Dendritic cell treated with granulocyte-macrophage colony-stimulating factor and Interleukin-4, amounts not matched to agents 40 ng/mL and 50 ng/mL, for 4 days (primary cell): ENCODE measurements at regions of chr6 and their contacts with region 1.

Region 1: DNA sequence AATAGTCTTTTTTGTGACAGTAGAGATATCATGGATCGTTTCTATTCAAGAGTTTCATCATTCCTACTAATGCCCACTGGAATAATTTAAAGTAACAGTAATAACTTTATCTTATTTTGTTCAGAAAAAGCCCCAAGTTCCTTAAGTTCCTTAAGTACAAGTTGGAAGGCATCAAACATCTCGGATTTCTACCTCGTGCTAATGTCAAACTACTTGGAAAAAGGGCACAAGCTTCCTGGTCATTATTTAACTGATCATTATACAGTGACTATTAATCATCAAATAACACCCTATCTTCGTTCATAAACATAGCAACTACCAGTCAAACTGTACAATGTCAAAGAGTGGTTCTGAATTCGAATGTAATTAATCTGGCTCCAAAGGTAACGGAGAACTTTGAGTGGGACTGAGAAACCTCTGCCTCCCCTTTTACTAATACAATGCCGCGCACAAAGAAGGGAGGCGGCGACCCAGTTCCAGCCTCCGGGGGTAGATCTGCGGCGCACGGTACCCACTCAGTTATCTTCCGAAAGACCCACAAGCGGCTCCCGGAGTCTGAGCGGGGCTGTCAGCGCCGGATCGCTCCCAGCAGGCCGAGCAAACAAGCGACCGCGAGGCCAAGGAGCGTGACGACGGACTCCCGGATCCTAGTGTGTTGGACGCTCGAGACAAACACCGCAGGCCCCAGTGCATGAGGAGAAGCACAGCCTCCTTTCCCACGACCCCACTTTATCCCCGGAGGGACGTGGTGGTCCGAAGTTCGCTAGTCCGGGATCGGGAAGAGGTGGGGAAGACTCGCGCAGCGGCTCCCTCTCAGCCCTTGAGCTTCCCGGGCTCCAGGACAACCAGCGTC is 716 bp downstream of the SHPRH start:
- H3K4me3 Mint-ChIP-seq: peak overlapping the region; percentile 92
- H3K27ac Mint-ChIP-seq: peak overlapping the region; percentile 94
- H3K4me1 Mint-ChIP-seq: peaks cover 20% of the 10 kb centered on the region
- H3K27me3 Mint-ChIP-seq: no peaks in the 10 kb centered on the region

Region 2: GRCh38 chr6:145734486-145735355 is 228.7 kb before region 1 on chr6:
- intact Hi-C with region 1: loop called (anchors 1 kb)
- H3K4me3 Mint-ChIP-seq: peak overlapping the region; percentile 99
- H3K27ac Mint-ChIP-seq: peak overlapping the region; percentile 97
- H3K4me1 Mint-ChIP-seq: peaks cover 31% of the 10 kb centered on the region
- H3K27me3 Mint-ChIP-seq: no peaks in the 10 kb centered on the region

Region 3: GRCh38 chr6:145814501-145815308 is 148.7 kb before region 1 on chr6 and contains the start of gene FBXO30:
- intact Hi-C with region 1: loop called (anchors 1 kb)
- H3K4me3 Mint-ChIP-seq: peak within 1 kb of the TSS; percentile 88
- H3K27ac Mint-ChIP-seq: peak within 1 kb of the TSS; percentile 97
- H3K4me1 Mint-ChIP-seq: peaks cover 36% of the 10 kb centered on the region
- H3K27me3 Mint-ChIP-seq: no peaks in the 10 kb centered on the region

Region 4: GRCh38 chr6:145948328-145948727 is 15.1 kb before region 1 on chr6:
- intact Hi-C with region 1: no loop called
- H3K4me3 Mint-ChIP-seq: no peak overlapping the region
- H3K27ac Mint-ChIP-seq: no peak overlapping the region
- H3K4me1 Mint-ChIP-seq: no peaks in the 10 kb centered on the region
- H3K27me3 Mint-ChIP-seq: no peaks in the 10 kb centered on the region

Region 5: DNA sequence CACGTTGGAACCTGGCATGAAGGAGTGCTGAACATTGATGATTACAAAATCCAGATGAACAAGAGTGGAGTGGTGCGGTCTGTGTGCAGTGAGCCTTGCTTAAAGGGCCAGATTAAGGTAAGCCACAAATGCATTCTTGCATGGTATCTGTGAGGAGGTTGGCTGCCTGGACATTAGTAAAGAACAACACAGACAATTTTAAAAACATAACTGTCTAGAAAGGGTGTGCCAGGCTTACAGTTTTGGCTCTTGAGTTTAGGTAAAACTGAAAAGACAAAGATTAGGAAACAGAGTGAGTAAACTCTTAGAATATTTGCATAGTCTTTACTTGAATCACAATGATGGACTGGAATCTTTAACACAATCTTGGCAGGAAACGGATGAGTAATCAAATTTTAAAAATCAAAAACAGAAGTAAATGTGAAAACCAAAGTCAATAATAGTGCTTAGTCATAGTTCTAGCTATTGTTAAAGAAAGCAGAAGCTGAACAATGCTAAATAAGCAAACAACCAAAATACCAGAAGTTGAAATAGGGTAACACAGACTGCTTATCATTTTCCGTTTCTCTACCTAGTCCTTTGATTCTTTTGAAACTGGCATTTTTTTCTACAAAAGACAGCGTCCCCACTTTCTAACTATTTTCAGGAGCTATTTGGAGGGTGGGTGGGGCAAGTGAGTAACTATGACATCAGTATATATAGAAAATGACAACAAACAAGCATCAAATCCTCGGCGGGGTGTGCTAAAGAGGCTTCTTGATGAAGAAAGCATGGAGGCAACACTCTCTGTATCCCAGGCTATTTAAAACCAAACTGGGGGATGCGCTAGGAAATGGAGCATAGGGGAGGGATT is 394.4 kb after region 1 on chr6:
- intact Hi-C with region 1: loop called (anchors 10 kb)
- H3K4me3 Mint-ChIP-seq: peak overlapping the region; percentile 65
- H3K27ac Mint-ChIP-seq: peak overlapping the region; percentile 90
- H3K4me1 Mint-ChIP-seq: peaks cover 60% of the 10 kb centered on the region
- H3K27me3 Mint-ChIP-seq: no peaks in the 10 kb centered on the region

Region 6: DNA sequence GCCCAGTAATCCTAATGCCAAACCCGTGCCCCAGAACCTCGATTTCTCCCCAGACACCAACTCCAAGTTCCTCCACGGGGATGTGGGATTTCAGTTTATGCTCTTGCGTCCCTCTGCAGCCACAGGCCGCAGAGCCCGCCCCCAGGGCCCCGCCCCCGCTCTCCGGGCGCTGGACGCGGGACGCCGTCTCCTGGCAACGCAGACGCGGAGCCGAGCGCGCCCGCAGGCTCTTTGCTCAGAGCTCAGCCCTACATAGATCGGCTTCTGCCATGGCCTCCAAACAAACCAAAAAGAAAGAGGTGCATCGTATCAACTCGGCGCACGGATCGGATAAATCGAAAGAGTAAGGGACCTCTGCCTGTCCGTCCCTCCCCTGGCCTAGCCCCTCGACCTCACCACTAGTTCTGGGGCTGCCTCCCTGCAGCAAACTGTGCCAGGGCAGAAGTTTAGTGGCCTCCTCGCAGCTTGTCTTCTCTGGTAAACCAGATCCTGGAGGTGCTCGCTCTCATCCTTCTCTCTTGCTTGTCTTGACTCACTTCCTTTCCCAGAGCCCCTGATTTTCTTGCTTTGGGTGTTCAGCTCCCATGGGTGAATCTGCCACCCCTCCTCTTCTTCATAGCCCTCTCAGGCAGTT is 635.4 kb after region 1 on chr6 and contains the start of gene ADGB:
- intact Hi-C with region 1: loop called (anchors 10 kb)
- H3K4me3 Mint-ChIP-seq: peak within 1 kb of the TSS; percentile 87
- H3K27ac Mint-ChIP-seq: peak within 1 kb of the TSS; percentile 80
- H3K4me1 Mint-ChIP-seq: peaks cover 43% of the 10 kb centered on the region
- H3K27me3 Mint-ChIP-seq: no peaks in the 10 kb centered on the region

Region 7: DNA sequence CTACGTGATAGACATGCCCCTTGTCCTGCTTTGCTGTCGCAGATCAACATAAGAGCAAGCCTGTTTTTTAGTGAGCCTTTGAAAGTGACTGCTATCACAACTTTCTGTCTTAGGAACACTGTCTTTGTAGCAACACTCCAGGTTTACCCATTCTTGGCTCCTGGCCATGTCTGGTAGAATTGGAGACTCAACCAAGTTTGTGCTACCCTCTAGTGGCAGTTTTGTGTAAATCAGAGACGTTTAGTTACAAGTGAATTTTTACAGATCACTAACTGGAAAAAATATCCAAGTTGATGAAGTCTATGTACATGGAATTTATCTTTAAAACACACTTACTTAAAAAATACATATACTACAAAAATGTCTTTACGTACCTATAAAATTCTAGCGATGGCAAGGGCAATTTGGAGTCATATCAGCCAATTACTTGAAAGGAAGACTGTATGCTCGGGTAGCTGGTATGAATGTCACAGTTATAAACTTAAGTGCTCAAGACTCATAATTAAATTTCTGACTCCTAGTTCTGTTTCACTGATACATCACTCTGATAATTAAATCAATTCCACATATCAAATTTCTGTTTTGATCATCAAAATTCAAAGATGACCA is 736.7 kb after region 1 on chr6:
- intact Hi-C with region 1: loop called (anchors 10 kb)
- H3K4me3 Mint-ChIP-seq: no peak overlapping the region
- H3K27ac Mint-ChIP-seq: no peak overlapping the region
- H3K4me1 Mint-ChIP-seq: no peaks in the 10 kb centered on the region
- H3K27me3 Mint-ChIP-seq: no peaks in the 10 kb centered on the region

Region 8: DNA sequence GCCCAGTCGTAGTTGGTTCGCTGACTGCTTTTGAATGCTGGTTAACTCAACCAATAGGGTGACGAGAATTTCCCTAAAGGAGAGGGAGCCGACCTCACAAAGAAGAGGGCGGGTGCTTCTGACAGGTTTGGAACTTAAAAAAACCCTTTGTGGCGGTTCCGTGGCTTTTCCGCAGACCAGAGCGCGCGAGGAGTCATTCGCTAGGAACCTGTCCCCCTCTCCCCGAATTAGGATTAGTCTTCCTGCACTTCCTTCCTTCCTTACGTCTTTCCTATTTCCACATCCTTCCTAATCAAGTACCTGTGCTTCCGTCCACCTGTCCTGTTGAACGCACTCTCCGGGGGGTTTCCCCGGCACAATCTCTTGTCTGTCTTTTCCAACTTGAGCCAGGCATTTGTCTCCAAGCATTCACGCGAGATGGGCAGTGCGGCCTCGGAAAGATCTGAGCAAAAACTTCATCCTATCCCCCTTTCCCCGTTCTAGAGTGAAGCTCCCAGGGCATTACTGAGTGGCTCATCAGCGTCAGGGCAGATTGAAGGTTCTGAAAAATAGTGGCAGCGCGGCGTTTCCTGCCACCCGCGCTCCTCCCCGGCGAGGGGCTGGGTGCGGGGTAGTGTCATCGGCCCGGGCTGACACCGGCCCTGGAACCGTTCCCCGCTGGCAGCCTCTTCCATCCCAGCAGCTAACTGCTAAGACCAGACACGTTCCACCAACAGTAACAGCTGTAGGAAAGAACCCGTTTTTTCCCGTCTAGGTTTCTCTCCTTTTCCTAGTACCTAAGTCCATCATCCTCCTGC is 1239.3 kb after region 1 on chr6:
- intact Hi-C with region 1: loop called (anchors 10 kb)
- H3K4me3 Mint-ChIP-seq: peak overlapping the region; percentile 85
- H3K27ac Mint-ChIP-seq: peak overlapping the region; percentile 94
- H3K4me1 Mint-ChIP-seq: peaks cover 35% of the 10 kb centered on the region
- H3K27me3 Mint-ChIP-seq: no peaks in the 10 kb centered on the region